Activated CD4-positive, alpha-beta T cell treated with anti-CD3 and anti-CD28 coated beads, Interleukin-2, amount 10 ng/mL, durations not matched to agents 24 days and 14 days (primary cell): ENCODE measurements at regions of chr12 and their contacts with region 1.

Region 1: DNA sequence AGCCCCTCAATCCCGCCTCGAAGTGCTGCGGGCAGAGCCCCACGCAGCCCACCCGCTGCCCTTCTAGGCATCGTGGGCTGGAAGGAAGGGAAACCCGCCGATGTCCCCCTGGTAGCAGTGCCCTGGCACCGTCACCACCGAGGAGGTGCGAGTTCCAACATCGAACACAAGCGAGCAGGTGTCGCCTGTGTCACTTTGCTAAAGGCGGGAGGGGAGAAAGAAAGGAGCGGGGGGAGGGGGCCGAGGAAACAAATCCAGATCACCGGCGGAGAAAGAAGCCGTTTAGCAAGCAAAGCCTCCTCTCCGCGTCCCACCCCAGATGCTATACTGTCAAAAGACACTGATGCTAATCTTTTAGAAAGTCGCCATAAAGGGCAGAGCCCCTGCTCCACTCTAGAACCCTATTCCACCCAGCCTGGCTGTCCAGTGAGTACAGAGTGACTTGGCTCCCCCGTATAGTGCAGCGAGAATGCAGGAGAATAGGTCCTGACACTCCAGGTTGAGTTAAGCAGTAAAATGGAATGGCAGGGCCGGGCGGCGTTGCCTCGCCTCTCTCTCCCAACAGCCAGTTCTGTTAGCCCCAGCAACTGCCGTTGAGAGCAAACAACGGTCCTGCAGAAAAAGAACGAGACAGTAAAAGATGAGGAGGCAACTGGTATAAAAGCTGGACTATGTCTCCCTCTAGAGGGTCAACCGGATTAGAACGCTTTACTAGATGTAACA is 67.9 kb upstream of the USP15 start:
- DNase-seq: peak; percentile 89
- H3K4me3 Mint-ChIP-seq: peak overlapping the region; percentile 85
- H3K27ac Mint-ChIP-seq: no peak overlapping the region
- H3K4me1 Mint-ChIP-seq: peaks cover 20% of the 10 kb centered on the region
- H3K27me3 Mint-ChIP-seq: peaks cover 68% of the 10 kb centered on the region

Region 2: DNA sequence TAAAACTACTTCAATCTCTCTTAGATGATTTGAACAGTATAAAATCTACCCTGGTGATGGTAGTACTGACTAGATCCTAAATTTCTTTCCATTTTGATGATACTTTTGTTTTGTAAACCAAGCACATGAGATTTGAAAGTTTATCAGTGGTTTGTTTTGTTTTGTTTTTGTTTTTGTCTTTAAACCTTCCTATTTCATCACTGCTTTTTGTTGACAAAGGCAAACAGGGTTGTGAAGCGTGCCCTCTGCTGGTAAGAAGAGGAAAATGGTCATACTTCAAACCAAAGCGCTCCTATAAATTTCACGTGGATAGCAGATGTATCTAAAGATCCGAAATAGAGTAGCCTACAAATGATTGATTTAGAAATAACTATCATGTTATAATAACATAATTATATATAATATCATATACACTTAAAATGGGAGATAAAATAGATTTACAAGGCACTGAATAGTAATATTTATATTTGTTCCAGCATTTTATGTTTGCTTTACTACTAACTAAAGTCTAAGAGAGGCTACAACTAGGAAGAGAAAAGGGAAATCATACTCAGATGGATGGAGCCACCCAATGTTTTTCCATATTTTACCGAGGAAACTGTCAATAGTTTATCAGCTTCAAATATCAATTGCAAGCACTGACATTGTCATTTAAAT is 186.1 kb before region 1 on chr12:
- intact Hi-C with region 1: loop called (anchors 1 kb)
- DNase-seq: peak; percentile 70
- H3K4me3 Mint-ChIP-seq: no peak overlapping the region
- H3K27ac Mint-ChIP-seq: no peak overlapping the region
- H3K4me1 Mint-ChIP-seq: no peaks in the 10 kb centered on the region
- H3K27me3 Mint-ChIP-seq: peaks cover 2% of the 10 kb centered on the region

Region 3: GRCh38 chr12:62123721-62124203 is 68.6 kb before region 1 on chr12:
- intact Hi-C with region 1: loop called (anchors 1 kb)
- DNase-seq: peak; percentile 74
- H3K4me3 Mint-ChIP-seq: no peak overlapping the region
- H3K27ac Mint-ChIP-seq: no peak overlapping the region
- H3K4me1 Mint-ChIP-seq: no peaks in the 10 kb centered on the region
- H3K27me3 Mint-ChIP-seq: peaks cover 11% of the 10 kb centered on the region